Sigmoid colon (tissue), 7 donors: ENCODE measurements at regions of chr9 and their contacts with region 1.

Region 1: DNA sequence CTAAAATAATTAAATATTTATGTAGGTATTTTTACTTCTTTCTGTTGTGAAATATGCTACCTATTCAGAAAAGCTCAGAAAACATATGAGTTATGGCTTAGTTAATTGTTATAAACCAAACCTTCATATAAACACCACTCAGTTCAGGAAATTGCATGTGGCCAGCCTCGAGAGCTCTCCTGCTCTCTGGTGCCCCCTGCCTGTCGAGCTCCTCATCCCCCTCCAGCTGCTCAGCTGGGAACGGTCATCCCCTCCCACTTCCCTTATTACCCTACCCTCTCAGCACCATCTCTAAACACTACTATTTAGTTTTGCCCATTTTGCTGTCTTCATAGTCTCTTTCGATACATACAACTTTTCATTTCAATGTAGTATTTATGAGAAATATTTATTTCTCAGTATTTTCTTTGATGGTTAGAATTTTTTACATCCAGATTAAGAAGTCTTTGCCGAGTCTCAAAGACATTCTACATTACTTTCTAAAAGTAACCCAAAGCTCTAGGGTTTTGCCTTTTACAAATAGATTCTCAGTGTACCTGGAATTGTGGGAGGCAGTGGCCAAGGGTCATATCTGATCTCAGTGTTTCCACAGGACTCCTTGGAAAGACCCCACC is 51.2 kb upstream of the SEMA4D start:
- DNase-seq: peak; percentile 82
- H3K4me3 ChIP-seq: no peak overlapping the region
- H3K27ac ChIP-seq: no peak overlapping the region
- H3K4me1 ChIP-seq: no peaks in the 10 kb centered on the region
- H3K27me3 ChIP-seq: no peaks in the 10 kb centered on the region
- CTCF ChIP-seq: peak; percentile 49 to 80 (median 66)
- EP300 ChIP-seq: no peak
- POLR2A ChIP-seq: no peak

Region 2: DNA sequence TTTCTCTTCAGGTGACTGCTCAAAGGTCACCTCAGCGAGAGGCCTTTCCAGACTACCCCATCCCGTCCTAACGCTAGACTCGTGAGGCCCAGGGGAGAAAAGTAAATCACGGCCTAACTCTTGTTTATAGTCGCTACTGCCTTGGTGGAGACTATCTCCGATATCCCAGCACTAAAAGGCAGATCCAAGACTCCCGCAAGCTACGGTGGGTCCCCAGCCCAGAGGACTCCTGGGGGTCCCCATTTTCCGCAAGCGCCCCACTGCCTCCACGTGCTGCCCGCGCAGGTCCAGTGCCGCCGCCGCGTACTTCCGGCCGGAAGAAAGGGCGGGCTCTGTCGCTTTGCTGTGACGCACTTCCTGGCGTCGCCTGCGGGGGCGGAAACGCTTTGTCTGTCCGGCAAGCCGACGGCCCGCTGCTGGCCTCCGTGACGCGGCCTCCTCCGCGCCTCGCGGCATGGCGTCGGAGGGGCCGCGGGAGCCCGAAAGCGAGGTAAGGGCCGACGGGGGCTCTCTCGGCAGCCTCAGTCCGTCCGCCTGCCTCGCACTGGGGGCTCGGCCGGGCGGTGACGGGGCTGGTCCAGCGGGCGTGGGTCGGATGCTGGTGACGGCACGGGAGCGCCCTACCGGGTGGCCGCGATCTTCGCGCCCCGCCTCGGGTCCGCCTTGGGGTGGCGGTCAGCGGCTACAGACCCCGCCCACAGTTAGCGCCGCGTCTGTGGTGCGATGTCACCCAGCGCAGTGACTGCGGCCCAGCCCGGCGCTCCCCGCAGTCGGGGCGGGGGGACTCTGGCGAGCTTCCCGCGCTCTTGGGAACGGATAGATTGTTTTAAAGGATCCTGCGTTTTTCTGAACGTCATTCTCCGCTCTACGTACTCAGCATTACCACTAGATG is 230.8 kb before region 1 on chr9 and contains the start of gene SECISBP2:
- intact Hi-C with region 1: loop called (anchors 2 kb)
- DNase-seq: peak; percentile 98
- H3K4me3 ChIP-seq: peak within 1 kb of the TSS; percentile 71 to 91 (median 82)
- H3K27ac ChIP-seq: peak within 1 kb of the TSS; percentile 98 to 100 (median 100)
- H3K4me1 ChIP-seq: peaks cover 0 to 48% (median 30%) of the 10 kb centered on the region in 4 donors
- H3K27me3 ChIP-seq: no peaks in the 10 kb centered on the region
- CTCF ChIP-seq: peak in 2 of 4 experiments; percentile 43 to 64
- EP300 ChIP-seq: peak in 3 of 4 donors; percentile 44 to 84 (median 84)
- POLR2A ChIP-seq: peak; percentile 89 to 90
- total RNA-seq, gene SECISBP2: 35.0 to 41.8 (median 39.0) TPM

Region 3: DNA sequence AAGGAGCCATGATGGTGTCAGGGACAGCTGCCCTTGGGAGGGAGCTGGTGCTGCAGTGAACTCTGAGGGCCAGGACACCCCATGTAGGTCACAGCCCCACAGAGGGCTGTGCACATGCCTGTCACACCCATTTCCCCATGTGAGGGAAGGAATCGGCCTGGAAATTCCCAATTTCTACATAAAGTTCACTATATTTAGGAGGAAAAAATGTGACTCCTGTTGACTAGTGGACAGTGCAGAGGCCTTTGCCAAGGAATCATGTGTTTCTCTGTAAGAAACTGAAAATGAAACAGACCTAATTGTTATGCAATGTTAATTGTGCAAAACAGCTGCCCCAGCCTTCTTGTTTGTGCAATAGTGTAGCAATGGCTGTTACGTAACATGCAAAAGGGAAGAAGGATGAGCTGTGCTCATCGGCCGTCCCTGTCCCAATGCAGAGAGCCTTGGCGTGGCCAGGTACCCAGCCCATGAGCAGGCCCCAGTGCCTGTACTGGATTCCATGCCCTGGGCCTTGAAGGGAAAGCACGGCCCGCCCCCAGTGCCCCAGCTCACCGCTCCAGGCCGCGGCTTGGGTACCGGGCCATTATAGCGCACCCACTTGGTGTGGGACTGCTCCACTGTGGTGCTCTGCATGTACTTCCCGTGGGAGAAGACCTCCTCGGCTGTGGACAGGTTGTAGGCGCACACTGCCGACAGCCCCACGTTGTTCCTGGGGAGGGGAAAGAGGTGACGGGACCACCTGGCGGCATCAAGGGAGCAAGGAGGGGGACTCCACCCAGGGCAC is 160.9 kb before region 1 on chr9:
- intact Hi-C with region 1: loop called (anchors 10 kb)
- DNase-seq: peak; percentile 86
- H3K4me3 ChIP-seq: no peak overlapping the region
- H3K27ac ChIP-seq: peak overlapping the region; percentile 52 to 70 (median 58)
- H3K4me1 ChIP-seq: peaks cover 0 to 8% (median 3%) of the 10 kb centered on the region in 4 donors
- H3K27me3 ChIP-seq: no peaks in the 10 kb centered on the region
- CTCF ChIP-seq: no peak
- EP300 ChIP-seq: peak in 2 of 4 donors; percentile 42 to 59
- POLR2A ChIP-seq: no peak